ENCODE measurements at regions of chr2 and their contacts with region 1.

Region 1: GRCh38 chr2:37389989-37390765 is 45.7 kb downstream of the QPCT start:
- DNase-seq: peak; percentile 73
- ATAC-seq: peak; percentile 94
- H3K4me3 Mint-ChIP-seq: no peak overlapping the region
- H3K27ac Mint-ChIP-seq: peak overlapping the region; percentile 28
- H3K4me1 Mint-ChIP-seq: peaks cover 4% of the 10 kb centered on the region
- H3K27me3 Mint-ChIP-seq: peaks cover 6% of the 10 kb centered on the region

Region 2: GRCh38 chr2:37361216-37361815 is 28.9 kb before region 1 on chr2:
- CTCF ChIA-PET with region 1: no interaction called
- POLR2A ChIA-PET with region 1: no interaction called
- DNase-seq: no peak
- ATAC-seq: no peak
- H3K4me3 Mint-ChIP-seq: no peak overlapping the region
- H3K27ac Mint-ChIP-seq: no peak overlapping the region
- H3K4me1 Mint-ChIP-seq: no peaks in the 10 kb centered on the region
- H3K27me3 Mint-ChIP-seq: peaks cover 51% of the 10 kb centered on the region

Region 3: DNA sequence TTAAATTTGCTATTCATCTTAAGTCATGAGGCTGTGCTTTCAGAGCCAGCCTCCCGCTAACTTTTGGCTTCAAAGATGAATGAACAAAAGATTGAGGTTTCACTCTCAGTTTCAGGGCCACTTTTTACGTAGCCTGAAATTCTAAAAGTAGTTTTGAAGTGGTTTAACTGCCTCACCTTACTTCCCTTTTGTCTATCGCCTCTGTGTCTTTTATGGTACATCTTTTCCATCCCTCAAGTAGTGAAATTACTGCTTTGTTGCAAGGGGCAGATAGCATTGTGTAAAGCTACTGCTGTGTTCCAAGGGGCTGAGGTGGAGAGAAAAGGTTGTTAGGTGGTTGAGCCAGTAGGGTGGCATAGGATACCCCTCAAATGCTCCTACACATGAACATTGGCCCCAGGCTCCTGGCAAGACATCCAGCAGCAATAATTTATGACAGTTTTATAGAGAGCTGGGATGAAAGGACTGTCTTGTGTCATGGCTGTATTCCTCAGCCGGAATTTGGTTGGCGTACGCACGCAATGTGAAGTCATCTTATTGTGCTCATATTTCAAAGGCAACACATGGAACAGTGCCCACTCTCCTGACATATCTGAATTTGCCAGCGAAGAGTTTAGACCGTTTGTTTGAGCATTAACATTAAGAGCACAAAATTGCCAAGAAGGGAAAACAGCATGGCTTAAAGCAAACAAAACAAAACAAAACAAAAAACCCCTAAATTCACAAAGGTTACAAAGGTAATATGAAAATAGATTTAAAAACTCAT is 13.6 kb before region 1 on chr2:
- CTCF ChIA-PET with region 1: interaction called, 21 read pairs
- POLR2A ChIA-PET with region 1: interaction called, 6 read pairs
- DNase-seq: peak; percentile 66
- ATAC-seq: peak; percentile 95
- H3K4me3 Mint-ChIP-seq: peak overlapping the region; percentile 50
- H3K27ac Mint-ChIP-seq: peak overlapping the region; percentile 5
- H3K4me1 Mint-ChIP-seq: peaks cover 31% of the 10 kb centered on the region
- H3K27me3 Mint-ChIP-seq: peaks cover 46% of the 10 kb centered on the region

Region 4: DNA sequence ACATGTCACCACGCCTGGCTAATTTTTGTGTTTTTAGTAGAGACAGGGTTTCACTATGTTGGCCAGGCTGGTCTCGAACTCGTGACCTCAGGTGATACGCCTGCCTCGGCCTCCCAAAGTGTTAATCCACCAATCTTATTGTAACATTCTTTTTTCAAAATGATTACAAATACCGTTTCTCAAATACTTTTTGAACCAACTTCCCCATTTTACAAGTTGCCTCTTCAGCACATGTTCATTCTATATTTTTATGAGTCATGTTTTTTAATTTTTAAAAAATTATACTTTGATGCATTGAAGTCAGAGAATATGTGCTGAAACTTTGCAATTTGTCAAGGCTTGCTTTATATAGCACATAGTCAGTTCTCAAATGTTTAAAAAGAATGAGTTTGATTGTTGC is 12.5 kb after region 1 on chr2:
- CTCF ChIA-PET with region 1: interaction called, 21 read pairs
- POLR2A ChIA-PET with region 1: no interaction called
- DNase-seq: no peak
- ATAC-seq: no peak
- H3K4me3 Mint-ChIP-seq: no peak overlapping the region
- H3K27ac Mint-ChIP-seq: no peak overlapping the region
- H3K4me1 Mint-ChIP-seq: no peaks in the 10 kb centered on the region
- H3K27me3 Mint-ChIP-seq: peaks cover 13% of the 10 kb centered on the region

Region 5: DNA sequence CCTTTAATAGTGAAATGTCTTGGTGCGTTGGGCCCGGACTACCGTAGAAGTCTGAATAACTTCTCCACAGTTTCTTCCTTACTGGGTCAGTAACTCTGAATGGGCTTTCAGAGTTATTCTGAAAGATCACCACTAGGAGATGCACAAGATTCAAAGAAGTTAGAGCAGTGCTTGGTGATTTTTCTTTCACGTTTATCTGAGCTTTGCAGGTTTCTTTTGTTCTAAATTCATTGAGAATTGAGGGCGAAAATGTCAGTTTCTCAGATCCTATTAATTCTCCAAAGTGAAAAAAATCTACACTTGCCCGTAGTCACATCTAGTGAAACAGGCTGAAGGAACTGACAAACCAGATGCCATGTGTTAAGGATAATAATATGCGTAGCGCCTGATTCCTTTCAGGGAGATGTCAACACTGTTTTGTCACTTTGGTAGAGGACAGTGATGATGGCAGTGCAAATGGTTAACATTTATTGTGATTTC is 24.3 kb after region 1 on chr2:
- CTCF ChIA-PET with region 1: interaction called, 21 read pairs
- POLR2A ChIA-PET with region 1: no interaction called
- DNase-seq: no peak
- ATAC-seq: peak; percentile 64
- H3K4me3 Mint-ChIP-seq: no peak overlapping the region
- H3K27ac Mint-ChIP-seq: no peak overlapping the region
- H3K4me1 Mint-ChIP-seq: peaks cover 4% of the 10 kb centered on the region
- H3K27me3 Mint-ChIP-seq: peaks cover 8% of the 10 kb centered on the region

Region 6: DNA sequence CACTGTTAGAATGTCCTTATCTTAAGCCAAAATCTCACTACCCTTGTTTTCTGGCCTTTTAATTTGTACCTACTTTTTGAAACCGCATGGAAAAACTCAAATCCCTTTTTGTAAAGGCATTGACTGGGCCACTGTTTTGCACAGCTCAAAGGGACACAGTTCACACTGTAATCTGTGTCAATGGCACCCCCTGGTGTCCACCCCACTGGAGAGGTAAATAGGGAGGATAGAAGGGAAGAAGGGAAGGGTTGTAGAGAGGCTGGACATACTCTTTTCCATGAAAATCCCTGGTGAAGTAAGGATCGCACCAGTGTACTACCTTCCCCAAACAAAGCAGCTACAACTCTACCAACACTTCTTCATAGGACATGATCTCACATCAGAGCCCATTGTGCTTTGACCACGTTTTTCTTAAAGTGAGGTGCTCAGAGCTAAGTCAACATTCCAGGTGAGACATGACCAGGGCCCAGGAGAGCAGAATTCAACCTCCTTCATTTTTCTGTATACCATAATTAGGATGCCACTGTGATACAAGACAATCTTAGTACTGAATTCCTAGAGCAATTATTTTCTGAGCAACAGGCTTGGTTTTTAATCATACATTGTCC is 442.5 kb after region 1 on chr2:
- CTCF ChIA-PET with region 1: interaction called, 69 read pairs
- POLR2A ChIA-PET with region 1: no interaction called
- DNase-seq: peak; percentile 86
- ATAC-seq: peak; percentile 91
- H3K4me3 Mint-ChIP-seq: no peak overlapping the region
- H3K27ac Mint-ChIP-seq: no peak overlapping the region
- H3K4me1 Mint-ChIP-seq: peaks cover 17% of the 10 kb centered on the region
- H3K27me3 Mint-ChIP-seq: no peaks in the 10 kb centered on the region

Region 7: GRCh38 chr2:37890893-37891495 is 500.8 kb after region 1 on chr2:
- CTCF ChIA-PET with region 1: interaction called, 12 read pairs
- POLR2A ChIA-PET with region 1: no interaction called
- DNase-seq: peak; percentile 76
- ATAC-seq: peak; percentile 77
- H3K4me3 Mint-ChIP-seq: no peak overlapping the region
- H3K27ac Mint-ChIP-seq: no peak overlapping the region
- H3K4me1 Mint-ChIP-seq: peaks cover 37% of the 10 kb centered on the region
- H3K27me3 Mint-ChIP-seq: peaks cover 9% of the 10 kb centered on the region

Measured in activated CD8-positive, alpha-beta T cell treated with anti-CD3 and anti-CD28 coated beads, Interleukin-2, amount 10 ng/mL, durations not matched to agents 7 days and 5 days (primary cell).